Mammary epithelial cell (primary cell): ENCODE measurements at regions of chr4 and their contacts with region 1.

Region 1: GRCh38 chr4:153249199-153250041 is 45.2 kb downstream of the TRIM2 start:
- DNase-seq: peak; percentile 73
- H3K4me3 ChIP-seq: peak overlapping the region; percentile 46 to 60 (median 53)
- H3K27ac ChIP-seq: peak overlapping the region; percentile 75
- H3K4me1 ChIP-seq: peaks cover 20% of the 10 kb centered on the region
- H3K27me3 ChIP-seq: no peaks in the 10 kb centered on the region
- CTCF ChIP-seq: no peak

Region 2: DNA sequence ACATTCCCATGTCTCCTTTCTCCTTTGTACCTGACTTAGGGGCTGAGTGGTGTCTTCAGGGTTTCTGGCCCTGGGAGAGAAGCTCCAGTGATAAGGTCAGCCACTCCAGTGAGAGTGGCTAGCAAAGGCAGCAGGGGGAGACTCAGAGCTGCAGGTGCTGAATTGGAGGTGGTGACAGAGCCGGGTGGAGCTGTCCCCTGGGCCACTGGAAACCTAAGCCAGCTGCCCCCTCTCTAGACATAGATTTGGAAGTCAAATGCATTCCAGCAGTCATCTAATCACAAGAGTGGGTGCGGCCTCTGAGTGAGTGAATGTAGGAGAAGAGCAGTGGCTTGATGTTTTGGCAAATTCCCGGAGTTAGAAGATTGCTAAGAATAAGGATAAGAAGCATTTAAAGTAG is 16.7 kb before region 1 on chr4:
- CTCF ChIA-PET with region 1: no interaction called
- dilution Hi-C with region 1: no loop called
- in situ Hi-C with region 1: no loop called
- intact Hi-C with region 1: loop called (anchors 1 kb)
- DNase-seq: peak; percentile 4
- H3K4me3 ChIP-seq: no peak overlapping the region
- H3K27ac ChIP-seq: no peak overlapping the region
- H3K4me1 ChIP-seq: peaks cover 42% of the 10 kb centered on the region
- H3K27me3 ChIP-seq: no peaks in the 10 kb centered on the region
- CTCF ChIP-seq: peak in 1 of 2 donors; percentile 34

Region 3: GRCh38 chr4:153296040-153296823 is 46.8 kb after region 1 on chr4:
- CTCF ChIA-PET with region 1: no interaction called
- dilution Hi-C with region 1: loop called (anchors 10 kb)
- in situ Hi-C with region 1: no loop called
- intact Hi-C with region 1: no loop called
- DNase-seq: peak; percentile 39
- H3K4me3 ChIP-seq: peak overlapping the region in 1 of 3 experiments; percentile 19
- H3K27ac ChIP-seq: no peak overlapping the region
- H3K4me1 ChIP-seq: peaks cover 36% of the 10 kb centered on the region
- H3K27me3 ChIP-seq: no peaks in the 10 kb centered on the region
- CTCF ChIP-seq: no peak

Region 4: DNA sequence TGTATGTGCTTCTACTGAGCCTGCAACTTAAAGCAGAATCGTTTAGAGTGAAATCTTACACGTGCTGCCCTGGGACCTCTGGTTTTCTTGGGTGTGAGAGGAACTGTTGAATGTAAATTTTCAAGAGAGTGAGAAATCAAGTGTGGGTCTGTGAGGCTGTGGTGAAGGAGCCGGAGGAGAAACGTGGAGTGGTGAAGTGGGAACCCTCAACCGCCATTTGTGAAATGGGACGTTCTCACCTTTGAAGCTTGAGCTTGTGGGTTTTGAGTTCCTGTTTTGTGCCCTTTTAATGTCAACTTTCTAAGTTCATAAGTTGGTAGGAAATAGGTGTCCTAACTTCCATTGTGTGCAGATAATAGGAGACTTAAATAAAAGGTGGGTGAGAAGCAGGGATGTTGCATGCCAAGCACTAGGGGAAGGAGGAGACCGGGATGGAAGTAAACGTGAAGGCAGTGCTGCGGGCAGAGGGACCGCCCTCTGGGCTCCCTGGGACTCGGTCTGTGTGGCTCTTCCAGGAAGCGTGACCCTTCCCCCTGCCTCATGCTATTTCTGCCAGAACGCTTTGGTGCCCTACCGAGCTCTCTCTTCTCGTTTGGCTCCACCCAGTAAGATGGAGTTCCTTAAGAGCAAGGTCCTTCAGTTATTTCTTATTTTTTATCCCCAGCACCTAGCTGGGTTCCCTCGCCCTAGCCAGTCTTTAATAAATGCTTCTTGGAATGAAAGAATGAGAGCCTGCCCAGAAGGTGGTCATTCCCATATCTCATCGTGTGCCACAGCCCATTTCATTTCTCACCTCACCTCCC is 272.8 kb after region 1 on chr4:
- CTCF ChIA-PET with region 1: no interaction called
- dilution Hi-C with region 1: no loop called
- in situ Hi-C with region 1: no loop called
- intact Hi-C with region 1: no loop called
- DNase-seq: no peak
- H3K4me3 ChIP-seq: no peak overlapping the region
- H3K27ac ChIP-seq: no peak overlapping the region
- H3K4me1 ChIP-seq: peaks cover 5% of the 10 kb centered on the region
- H3K27me3 ChIP-seq: no peaks in the 10 kb centered on the region
- CTCF ChIP-seq: no peak